ENCODE measurements at regions of chr12 and their contacts with region 1.

Region 1: DNA sequence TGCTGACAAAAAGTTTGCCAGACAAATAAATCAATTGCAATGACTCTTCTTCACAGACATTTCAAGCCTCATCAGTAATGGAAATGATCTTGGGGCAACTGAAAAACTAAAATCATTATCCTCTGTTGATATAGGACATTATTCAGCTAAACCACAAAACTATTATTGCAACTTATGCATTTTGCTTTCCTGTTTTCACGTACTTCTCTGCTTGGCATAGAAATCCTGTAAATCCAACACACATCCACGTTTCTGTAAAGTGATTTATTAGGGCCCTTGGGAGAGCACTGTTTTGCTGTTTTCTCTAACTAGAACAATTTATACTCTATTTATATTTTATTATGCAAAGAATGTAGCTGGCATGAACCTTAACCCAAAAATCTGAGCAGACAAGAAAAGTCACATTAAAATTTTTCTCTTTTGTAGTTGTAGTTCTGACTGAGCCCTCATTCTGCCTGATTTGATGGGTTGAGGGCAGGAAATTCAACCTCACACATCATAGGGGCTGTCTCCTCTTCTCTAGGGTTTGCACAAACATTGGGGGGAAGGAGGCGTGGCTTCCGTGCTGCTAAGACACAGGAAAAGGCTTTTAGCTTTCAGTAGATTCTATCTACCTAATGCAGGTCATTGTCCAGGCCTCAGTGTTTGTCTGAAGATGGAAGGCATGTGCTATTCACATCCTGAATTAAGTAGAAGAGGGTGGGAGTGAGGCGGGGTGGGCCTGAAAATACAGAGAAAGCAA is 11.5 kb upstream of the NUP107 start:
- DNase-seq: peak; percentile 37 to 91 (median 75)
- ATAC-seq: peak; percentile 98
- H3K4me3 ChIP-seq: peak overlapping the region; percentile 2
- H3K4me3 Mint-ChIP-seq: peak overlapping the region; percentile 60
- H3K27ac ChIP-seq: peak overlapping the region; percentile 26 to 45
- H3K27ac Mint-ChIP-seq: peak overlapping the region; percentile 77
- H3K4me1 ChIP-seq: peaks cover 29% of the 10 kb centered on the region
- H3K4me1 Mint-ChIP-seq: peaks cover 59% of the 10 kb centered on the region
- H3K27me3 ChIP-seq: no peaks in the 10 kb centered on the region
- H3K27me3 Mint-ChIP-seq: no peaks in the 10 kb centered on the region
- CTCF ChIP-seq: no peak

Region 2: GRCh38 chr12:68364893-68365725 is 310.2 kb before region 1 on chr12:
- CTCF ChIA-PET with region 1: no interaction called
- POLR2A ChIA-PET with region 1: interaction called, 6 read pairs
- intact Hi-C with region 1: loop called in 1 of 2 experiments (anchors 10 kb)
- DNase-seq: peak; percentile 46 to 95 (median 74)
- ATAC-seq: peak; percentile 90
- H3K4me3 ChIP-seq: peak overlapping the region; percentile 49
- H3K4me3 Mint-ChIP-seq: peak overlapping the region; percentile 88
- H3K27ac ChIP-seq: peak overlapping the region; percentile 64 to 79
- H3K27ac Mint-ChIP-seq: peak overlapping the region; percentile 93
- H3K4me1 ChIP-seq: peaks cover 52% of the 10 kb centered on the region
- H3K4me1 Mint-ChIP-seq: peaks cover 75% of the 10 kb centered on the region
- H3K27me3 ChIP-seq: no peaks in the 10 kb centered on the region
- H3K27me3 Mint-ChIP-seq: no peaks in the 10 kb centered on the region
- CTCF ChIP-seq: no peak

Region 3: DNA sequence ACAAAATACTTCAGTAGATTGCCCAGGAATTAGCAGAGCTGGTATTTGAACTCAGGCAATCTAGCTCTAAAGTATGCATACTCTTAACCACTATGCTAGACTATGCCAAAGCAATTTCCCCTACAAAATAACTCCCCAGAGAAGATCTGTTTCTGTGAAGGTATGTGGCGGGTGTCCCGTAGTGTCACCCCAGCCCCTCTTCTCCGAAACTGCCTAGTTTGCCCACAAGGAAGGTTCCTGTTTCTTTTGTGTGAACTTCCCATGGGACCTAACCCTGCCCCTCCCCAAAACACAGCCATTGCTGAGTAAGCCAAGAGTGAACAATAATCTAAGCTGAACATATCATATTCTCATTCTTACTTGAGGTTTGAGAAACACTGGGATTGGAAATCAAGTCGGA is 80.0 kb before region 1 on chr12:
- CTCF ChIA-PET with region 1: no interaction called
- POLR2A ChIA-PET with region 1: interaction called, 6 read pairs
- intact Hi-C with region 1: loop called in 1 of 2 experiments (anchors 5 kb)
- DNase-seq: no peak
- ATAC-seq: no peak
- H3K4me3 ChIP-seq: no peak overlapping the region
- H3K4me3 Mint-ChIP-seq: peak overlapping the region; percentile 22
- H3K27ac ChIP-seq: no peak overlapping the region
- H3K27ac Mint-ChIP-seq: peak overlapping the region; percentile 37
- H3K4me1 ChIP-seq: peaks cover 54% of the 10 kb centered on the region
- H3K4me1 Mint-ChIP-seq: peaks cover 77% of the 10 kb centered on the region
- H3K27me3 ChIP-seq: no peaks in the 10 kb centered on the region
- H3K27me3 Mint-ChIP-seq: no peaks in the 10 kb centered on the region
- CTCF ChIP-seq: no peak

Region 4: GRCh38 chr12:68641138-68641537 is 34.1 kb before region 1 on chr12:
- CTCF ChIA-PET with region 1: no interaction called
- POLR2A ChIA-PET with region 1: interaction called, 5 read pairs
- intact Hi-C with region 1: loop called in 1 of 2 experiments (anchors 5 kb)
- DNase-seq: peak in 5 of 14 experiments; percentile 17 to 54 (median 42)
- ATAC-seq: peak; percentile 55
- H3K4me3 ChIP-seq: peak overlapping the region; percentile 17
- H3K4me3 Mint-ChIP-seq: peak overlapping the region; percentile 76
- H3K27ac ChIP-seq: peak overlapping the region in 1 of 2 donors; percentile 35
- H3K27ac Mint-ChIP-seq: peak overlapping the region; percentile 52
- H3K4me1 ChIP-seq: peaks cover 46% of the 10 kb centered on the region
- H3K4me1 Mint-ChIP-seq: peaks cover 93% of the 10 kb centered on the region
- H3K27me3 ChIP-seq: no peaks in the 10 kb centered on the region
- H3K27me3 Mint-ChIP-seq: no peaks in the 10 kb centered on the region
- CTCF ChIP-seq: no peak